ENCODE measurements at regions of chr2 and their contacts with region 1.

Region 1: GRCh38 chr2:241844066-241844728 is 14.5 kb downstream of the PDCD1 start:
- DNase-seq: peak; percentile 87
- H3K4me3 Mint-ChIP-seq: peak overlapping the region; percentile 68
- H3K27ac Mint-ChIP-seq: peak overlapping the region; percentile 63
- H3K4me1 Mint-ChIP-seq: peaks cover 35% of the 10 kb centered on the region
- H3K27me3 Mint-ChIP-seq: peaks cover 36% of the 10 kb centered on the region

Region 2: GRCh38 chr2:241741016-241741415 is 103.2 kb before region 1 on chr2:
- CTCF ChIA-PET with region 1: no interaction called
- POLR2A ChIA-PET with region 1: interaction called, 12 read pairs
- DNase-seq: peak; percentile 61
- H3K4me3 Mint-ChIP-seq: no peak overlapping the region
- H3K27ac Mint-ChIP-seq: peak overlapping the region; percentile 1
- H3K4me1 Mint-ChIP-seq: peaks cover 47% of the 10 kb centered on the region
- H3K27me3 Mint-ChIP-seq: peaks cover 1% of the 10 kb centered on the region

Region 3: DNA sequence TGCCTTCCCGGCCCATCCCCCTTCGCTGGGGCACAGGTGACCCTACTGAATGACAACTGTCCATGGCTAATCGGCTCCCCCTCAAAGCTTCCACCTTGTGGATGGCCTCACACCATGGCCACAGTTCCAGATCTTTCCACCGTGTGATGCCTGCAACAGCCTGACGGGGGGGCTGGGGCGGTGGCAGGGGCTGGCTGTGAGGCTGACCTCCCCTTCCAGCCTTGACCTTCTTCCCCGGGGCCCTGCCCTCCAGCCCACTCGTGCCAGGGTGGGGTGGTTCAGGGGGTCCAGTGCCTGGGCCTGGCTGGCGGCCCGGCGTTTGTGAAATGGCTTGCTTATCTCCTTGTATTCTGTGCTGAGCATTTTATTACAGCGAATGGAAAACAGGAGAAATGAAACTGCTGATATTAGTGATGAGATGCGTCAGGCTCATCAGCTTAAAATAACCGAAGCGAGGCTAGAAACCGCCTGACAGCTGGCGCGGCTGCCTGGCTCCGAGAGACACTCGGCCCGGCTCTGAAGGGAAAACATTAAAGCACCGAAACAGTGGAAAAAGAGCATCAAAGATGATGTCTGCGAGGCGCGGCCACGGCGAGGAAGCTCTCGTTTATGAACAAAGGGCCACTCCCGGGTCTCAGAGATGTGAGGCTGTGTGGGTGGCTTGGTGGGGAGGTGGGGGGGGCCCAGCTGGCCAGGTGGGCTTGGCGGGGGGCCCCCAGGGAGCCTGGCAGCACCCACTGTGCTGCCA is 15.4 kb after region 1 on chr2:
- CTCF ChIA-PET with region 1: interaction called, 12 read pairs
- POLR2A ChIA-PET with region 1: interaction called, 18 read pairs
- DNase-seq: peak; percentile 63
- H3K4me3 Mint-ChIP-seq: peak overlapping the region; percentile 73
- H3K27ac Mint-ChIP-seq: peak overlapping the region; percentile 92
- H3K4me1 Mint-ChIP-seq: peaks cover 66% of the 10 kb centered on the region
- H3K27me3 Mint-ChIP-seq: peaks cover 6% of the 10 kb centered on the region